Right ventricle myocardium inferior (tissue), 1 donor: ENCODE measurements at regions of chr4 and their contacts with region 1.

Region 1: GRCh38 chr4:113636438-113636818 is 125.1 kb downstream of the CAMK2D start:
- DNase-seq: no peak
- ATAC-seq: no peak

Region 2: DNA sequence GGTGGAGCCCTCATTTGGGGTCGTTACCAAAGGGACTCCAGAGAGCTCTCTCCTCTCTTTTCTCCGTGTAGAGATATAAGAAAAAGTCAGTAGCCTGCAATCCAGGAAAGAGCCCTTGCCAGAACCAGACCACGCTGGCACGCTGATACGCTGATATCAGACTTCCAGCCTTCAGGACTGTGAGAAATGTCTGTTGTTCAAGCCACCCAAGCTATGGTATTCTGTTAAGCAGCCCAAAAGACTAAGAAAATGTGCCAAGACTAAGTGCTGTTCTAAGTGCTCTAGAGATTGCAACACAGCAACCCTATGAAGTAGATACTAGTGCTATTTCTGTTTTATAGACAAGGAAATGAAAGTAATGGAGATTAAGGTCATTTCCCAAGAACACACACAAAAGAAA is 80.6 kb before region 1 on chr4:
- intact Hi-C with region 1: loop called (anchors 5 kb)
- DNase-seq: no peak
- ATAC-seq: peak; percentile 95

Region 3: GRCh38 chr4:113572620-113573019 is 63.8 kb before region 1 on chr4:
- intact Hi-C with region 1: no loop called
- DNase-seq: no peak
- ATAC-seq: no peak

Region 4: GRCh38 chr4:113584407-113585150 is 51.8 kb before region 1 on chr4:
- intact Hi-C with region 1: loop called (anchors 2 kb)
- DNase-seq: no peak
- ATAC-seq: peak; percentile 42

Region 5: DNA sequence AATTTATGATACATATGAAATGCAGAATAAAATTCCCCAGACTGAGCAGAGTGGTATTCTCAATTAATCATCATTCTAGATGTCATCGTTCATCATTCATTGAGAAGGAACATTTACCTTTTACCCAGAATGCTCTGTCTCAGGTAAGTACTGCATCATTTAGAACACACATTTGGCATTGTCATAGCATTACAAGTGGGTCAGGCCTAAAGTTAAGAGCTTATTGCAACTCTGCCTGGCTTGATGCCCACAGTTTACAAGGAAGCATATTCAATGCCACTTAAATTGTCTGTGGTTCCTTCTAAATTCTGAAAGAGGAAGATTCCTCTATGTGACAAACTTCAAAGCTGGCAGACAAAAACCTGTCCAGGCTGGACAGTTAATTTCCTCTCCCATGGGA is 37.8 kb after region 1 on chr4:
- intact Hi-C with region 1: loop called (anchors 2 kb)
- DNase-seq: no peak
- ATAC-seq: peak; percentile 36